ENCODE measurements at regions of chr2 and their contacts with region 1.

Region 1: DNA sequence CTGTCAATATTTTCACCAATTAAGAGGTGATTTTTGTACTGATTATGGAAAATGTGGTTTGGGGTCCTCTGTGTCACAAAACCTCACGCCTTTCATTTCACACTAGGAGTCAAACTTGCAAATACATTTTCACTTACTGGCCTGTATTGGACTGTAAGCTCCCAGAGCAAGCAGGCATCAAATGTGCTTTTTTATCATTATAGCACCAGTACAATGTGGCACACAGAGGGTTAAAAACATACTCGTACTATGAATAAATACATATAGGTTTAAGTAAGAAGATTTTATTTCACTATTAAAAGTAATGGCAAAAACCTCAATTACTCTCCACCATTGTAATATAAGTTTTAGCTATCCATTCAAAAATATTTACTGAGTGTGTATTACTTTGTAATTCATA is 56.7 kb downstream of the ABCB11 start:
- DNase-seq: no peak
- H3K4me3 Mint-ChIP-seq: no peak overlapping the region
- H3K27ac Mint-ChIP-seq: no peak overlapping the region
- H3K4me1 Mint-ChIP-seq: no peaks in the 10 kb centered on the region
- H3K27me3 Mint-ChIP-seq: no peaks in the 10 kb centered on the region

Region 2: GRCh38 chr2:169462896-169463695 is 488.7 kb after region 1 on chr2:
- CTCF ChIA-PET with region 1: no interaction called
- intact Hi-C with region 1: loop called (anchors 5 kb)
- DNase-seq: no peak
- H3K4me3 Mint-ChIP-seq: no peak overlapping the region
- H3K27ac Mint-ChIP-seq: no peak overlapping the region
- H3K4me1 Mint-ChIP-seq: no peaks in the 10 kb centered on the region
- H3K27me3 Mint-ChIP-seq: no peaks in the 10 kb centered on the region